ENCODE measurements at regions of chr16 and their contacts with region 1.

Region 1: DNA sequence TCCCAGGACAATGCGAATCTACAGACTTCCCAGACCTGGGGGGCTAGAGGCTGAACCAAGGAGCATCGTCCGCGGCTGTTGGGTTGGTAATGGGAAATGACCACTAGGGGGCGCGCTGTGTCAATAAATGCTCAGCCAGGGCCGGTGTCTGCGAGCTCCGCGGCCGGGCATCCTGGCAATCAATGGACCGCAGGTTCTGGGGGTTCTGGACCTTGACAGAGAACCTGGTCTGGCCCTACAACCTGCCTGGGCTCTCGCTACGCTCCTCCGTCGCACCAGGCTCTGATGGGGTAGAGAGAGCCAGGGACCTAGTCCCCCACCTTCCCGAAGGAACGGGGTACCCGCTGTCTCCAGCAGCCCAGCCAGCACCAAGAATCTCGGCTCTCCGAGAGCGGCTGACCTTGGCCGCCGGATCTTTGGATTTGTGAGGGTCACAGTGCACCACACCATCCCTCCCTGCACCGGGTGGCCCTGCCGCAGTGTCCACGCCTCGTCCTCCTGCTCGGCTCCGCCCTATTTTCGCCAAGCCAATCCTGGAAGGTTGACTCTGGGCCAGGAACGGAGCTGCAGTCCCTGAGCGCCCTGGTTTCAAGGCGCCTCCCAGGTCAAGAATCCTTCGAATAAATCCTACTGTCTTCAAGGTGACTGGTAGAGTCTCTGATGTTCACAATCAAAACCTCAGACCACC is 20.4 kb upstream of the BEAN1 start:
- DNase-seq: peak; percentile 92
- H3K4me3 Mint-ChIP-seq: peak overlapping the region; percentile 80
- H3K27ac Mint-ChIP-seq: no peak overlapping the region
- H3K4me1 Mint-ChIP-seq: peaks cover 24% of the 10 kb centered on the region
- H3K27me3 Mint-ChIP-seq: peaks cover 2% of the 10 kb centered on the region

Region 2: GRCh38 chr16:66474750-66475199 is 68.1 kb after region 1 on chr16:
- CTCF ChIA-PET with region 1: interaction called, 73 read pairs
- POLR2A ChIA-PET with region 1: no interaction called
- intact Hi-C with region 1: loop called (anchors 1 kb)
- DNase-seq: peak; percentile 77
- H3K4me3 Mint-ChIP-seq: no peak overlapping the region
- H3K27ac Mint-ChIP-seq: peak overlapping the region; percentile 63
- H3K4me1 Mint-ChIP-seq: peaks cover 22% of the 10 kb centered on the region
- H3K27me3 Mint-ChIP-seq: no peaks in the 10 kb centered on the region

Region 3: DNA sequence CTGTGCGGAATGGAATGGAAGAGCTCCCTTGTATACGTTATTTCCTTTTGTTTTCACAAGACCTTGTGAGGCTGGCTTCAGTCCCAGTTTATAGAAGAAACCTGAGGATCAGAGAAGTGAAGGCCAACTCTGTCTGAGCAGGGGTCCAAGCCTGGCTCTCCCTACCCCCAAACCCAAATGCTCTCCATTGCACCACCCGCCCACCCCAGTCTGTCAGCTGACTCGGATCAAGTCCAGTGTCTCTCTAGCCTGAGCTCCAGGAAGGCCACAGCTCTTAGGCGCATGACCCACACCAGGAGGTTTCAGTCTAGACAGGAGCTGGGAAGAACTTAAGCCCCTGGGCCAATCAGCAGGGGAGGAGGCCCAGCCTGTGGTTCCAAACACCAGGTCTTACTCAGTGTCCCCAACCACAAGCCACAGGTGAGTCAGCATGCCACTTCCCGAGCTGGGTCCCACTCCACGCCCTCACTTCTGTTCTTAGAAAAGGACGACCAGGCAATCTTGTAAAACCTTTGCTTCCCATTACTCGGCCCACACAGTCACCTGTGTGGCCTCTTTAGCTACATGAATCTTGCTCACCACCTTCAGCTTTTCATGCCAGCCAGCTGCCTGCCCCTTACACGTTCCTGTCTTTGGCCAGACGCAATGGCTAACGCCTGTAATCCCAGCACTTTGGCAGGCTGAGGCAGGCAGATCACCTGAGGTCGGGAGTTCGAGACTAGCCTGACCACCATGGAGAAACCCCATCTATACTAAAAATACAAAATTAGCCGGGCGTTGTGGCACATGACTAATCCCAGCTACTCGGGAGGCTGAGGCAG is 115.5 kb after region 1 on chr16:
- CTCF ChIA-PET with region 1: interaction called, 24 read pairs
- POLR2A ChIA-PET with region 1: no interaction called
- intact Hi-C with region 1: no loop called
- DNase-seq: peak; percentile 99
- H3K4me3 Mint-ChIP-seq: peak overlapping the region; percentile 68
- H3K27ac Mint-ChIP-seq: peak overlapping the region; percentile 96
- H3K4me1 Mint-ChIP-seq: peaks cover 89% of the 10 kb centered on the region
- H3K27me3 Mint-ChIP-seq: no peaks in the 10 kb centered on the region

Region 4: GRCh38 chr16:66608241-66609138 is 201.8 kb after region 1 on chr16:
- CTCF ChIA-PET with region 1: interaction called, 33 read pairs
- POLR2A ChIA-PET with region 1: no interaction called
- intact Hi-C with region 1: loop called (anchors 1 kb)
- DNase-seq: peak; percentile 89
- H3K4me3 Mint-ChIP-seq: no peak overlapping the region
- H3K27ac Mint-ChIP-seq: peak overlapping the region; percentile 62
- H3K4me1 Mint-ChIP-seq: peaks cover 34% of the 10 kb centered on the region
- H3K27me3 Mint-ChIP-seq: no peaks in the 10 kb centered on the region

Region 5: GRCh38 chr16:66740010-66740409 is 333.3 kb after region 1 on chr16:
- CTCF ChIA-PET with region 1: interaction called, 22 read pairs
- POLR2A ChIA-PET with region 1: no interaction called
- intact Hi-C with region 1: loop called (anchors 2 kb)
- DNase-seq: peak; percentile 46
- H3K4me3 Mint-ChIP-seq: no peak overlapping the region
- H3K27ac Mint-ChIP-seq: no peak overlapping the region
- H3K4me1 Mint-ChIP-seq: peaks cover 15% of the 10 kb centered on the region
- H3K27me3 Mint-ChIP-seq: no peaks in the 10 kb centered on the region

Measured in activated CD4-positive, alpha-beta memory T cell treated with anti-CD3 and anti-CD28 coated beads for 36 hours (primary cell).